ENCODE measurements at regions of chr18 and their contacts with region 1.

Region 1: GRCh38 chr18:57630002-57630753 is 8.5 kb upstream of the NARS1 start:
- DNase-seq: peak; percentile 65
- ATAC-seq: peak; percentile 93
- H3K4me3 ChIP-seq: peak overlapping the region; percentile 90
- H3K27ac ChIP-seq: peak overlapping the region; percentile 87
- H3K4me1 ChIP-seq: peaks cover 6% of the 10 kb centered on the region
- H3K27me3 ChIP-seq: no peaks in the 10 kb centered on the region
- CTCF ChIP-seq: peak; percentile 74 to 81 (median 78)
- EP300 ChIP-seq: no peak
- POLR2A ChIP-seq: peak; percentile 74
- RAD21 ChIP-seq: peak; percentile 82

Region 2: DNA sequence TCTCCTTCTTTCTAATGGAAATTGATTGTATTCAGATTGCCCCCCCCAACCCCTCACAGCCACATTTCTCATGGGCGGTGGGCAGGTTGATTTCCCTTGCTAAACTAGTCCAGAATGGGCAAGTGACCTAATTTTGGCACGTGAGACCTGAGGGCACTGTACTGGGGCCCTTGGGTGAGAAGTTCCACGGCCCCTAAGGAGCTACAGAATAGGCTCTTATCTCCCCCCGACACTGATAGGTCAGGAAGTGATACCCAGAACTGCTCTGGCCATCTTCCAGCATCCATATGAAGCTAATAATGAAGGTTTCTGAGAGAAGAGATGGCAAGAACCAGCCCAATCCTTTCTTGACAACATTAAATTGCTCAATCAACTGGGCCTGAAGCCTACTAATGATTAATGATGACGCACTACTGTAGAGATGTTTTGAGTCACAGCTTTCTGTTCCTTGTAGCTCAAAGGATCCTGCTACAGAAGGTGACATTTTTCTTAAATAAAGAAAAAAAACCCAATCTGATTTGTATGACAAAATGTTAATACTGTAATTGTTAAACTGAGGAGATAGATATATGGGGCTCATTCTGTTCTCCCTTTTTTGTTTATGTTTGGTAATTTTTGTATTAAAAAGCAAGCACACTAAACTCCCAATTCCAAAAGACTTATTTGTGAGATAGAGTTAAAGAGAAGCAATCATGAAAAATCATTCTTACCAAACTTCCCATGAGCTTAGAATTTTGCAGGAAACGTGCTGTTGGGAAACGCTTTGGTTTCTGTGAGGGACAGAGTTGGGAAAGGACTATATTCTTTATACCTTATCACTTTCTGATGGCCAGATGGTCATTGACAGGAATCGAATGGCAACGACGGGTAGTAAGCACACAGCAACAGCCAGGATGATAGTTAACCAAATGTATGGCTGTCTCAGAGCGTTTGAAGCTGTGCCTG is 19.6 kb after region 1 on chr18:
- CTCF ChIA-PET with region 1: no interaction called
- POLR2A ChIA-PET with region 1: no interaction called
- RAD21 ChIA-PET with region 1: no interaction called
- SMC1A ChIA-PET with region 1: no interaction called
- in situ Hi-C with region 1: no loop called
- intact Hi-C with region 1: loop called (anchors 2 kb)
- DNase-seq: peak; percentile 49
- ATAC-seq: peak; percentile 97
- H3K4me3 ChIP-seq: no peak overlapping the region
- H3K27ac ChIP-seq: no peak overlapping the region
- H3K4me1 ChIP-seq: peaks cover 5% of the 10 kb centered on the region
- H3K27me3 ChIP-seq: no peaks in the 10 kb centered on the region
- CTCF ChIP-seq: no peak
- EP300 ChIP-seq: peak in 1 of 2 experiments; percentile 77; a peak in 2 of 4 replicates
- POLR2A ChIP-seq: no peak
- RAD21 ChIP-seq: no peak

Region 3: DNA sequence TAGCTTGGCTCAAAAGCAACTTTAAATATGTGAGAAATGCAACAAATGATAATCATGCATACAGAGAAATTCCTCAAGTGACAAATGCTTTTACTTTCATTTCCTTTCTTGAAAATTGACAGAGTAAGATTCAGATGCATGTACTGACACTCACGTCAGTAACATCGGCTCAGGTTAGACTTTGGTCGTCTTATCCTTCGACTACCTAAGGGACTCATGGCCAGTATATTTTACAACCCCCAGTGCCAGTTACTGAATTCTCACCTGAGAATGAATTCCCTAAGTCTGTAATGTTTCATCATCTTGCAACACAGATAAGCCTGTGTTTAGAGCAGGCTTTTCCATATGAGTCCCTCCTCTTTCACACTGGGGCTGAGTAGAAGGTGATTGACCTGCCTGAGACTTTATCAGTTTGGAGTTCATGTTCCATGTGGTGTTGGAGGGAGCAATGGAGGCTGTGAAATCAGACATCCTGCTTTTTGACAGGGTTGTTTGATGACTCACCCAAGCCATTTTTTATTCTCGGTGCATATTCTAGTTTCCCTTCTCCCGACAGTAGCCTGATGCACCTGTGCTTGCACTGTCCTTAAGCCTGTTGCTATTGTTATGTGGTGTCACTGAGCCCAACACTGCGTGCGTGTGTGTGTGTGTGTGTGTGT is 203.4 kb after region 1 on chr18:
- CTCF ChIA-PET with region 1: interaction called, 13 read pairs
- POLR2A ChIA-PET with region 1: interaction called, 3 read pairs
- RAD21 ChIA-PET with region 1: interaction called, 14 read pairs
- SMC1A ChIA-PET with region 1: interaction called, 9 read pairs
- in situ Hi-C with region 1: loop called (anchors 25 kb)
- intact Hi-C with region 1: no loop called
- DNase-seq: peak; percentile 55
- ATAC-seq: peak; percentile 52
- H3K4me3 ChIP-seq: peak overlapping the region; percentile 20; the same call in 1 of the 2 replicates
- H3K27ac ChIP-seq: peak overlapping the region; percentile 82
- H3K4me1 ChIP-seq: peaks cover 20% of the 10 kb centered on the region
- H3K27me3 ChIP-seq: no peaks in the 10 kb centered on the region
- CTCF ChIP-seq: no peak
- EP300 ChIP-seq: no peak
- POLR2A ChIP-seq: no peak
- RAD21 ChIP-seq: no peak

Region 4: DNA sequence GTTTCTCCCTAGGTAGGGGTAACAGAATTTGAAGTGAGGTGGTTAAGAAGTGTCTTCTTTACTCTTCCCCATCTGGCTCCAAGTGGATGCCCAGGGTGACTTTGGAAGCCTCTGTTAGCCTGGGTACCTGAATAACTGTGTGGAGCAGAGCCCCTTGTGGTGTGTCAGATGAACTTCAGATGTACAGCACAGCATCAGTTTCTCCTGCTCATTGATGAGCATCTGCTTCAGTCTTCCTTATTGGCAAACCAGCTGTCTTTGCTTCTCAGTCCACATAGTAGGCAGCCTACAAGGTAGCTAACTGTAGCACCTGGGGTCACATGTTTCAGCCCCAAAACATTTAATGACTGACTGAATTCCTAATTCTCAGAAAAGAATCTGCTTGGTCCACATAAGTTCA is 229.1 kb after region 1 on chr18:
- CTCF ChIA-PET with region 1: interaction called, 8 read pairs
- POLR2A ChIA-PET with region 1: interaction called, 3 read pairs
- RAD21 ChIA-PET with region 1: interaction called, 9 read pairs
- SMC1A ChIA-PET with region 1: interaction called, 24 read pairs
- in situ Hi-C with region 1: no loop called
- intact Hi-C with region 1: loop called (anchors 5 kb)
- DNase-seq: no peak
- ATAC-seq: peak; percentile 88
- H3K4me3 ChIP-seq: no peak overlapping the region
- H3K27ac ChIP-seq: no peak overlapping the region
- H3K4me1 ChIP-seq: no peaks in the 10 kb centered on the region
- H3K27me3 ChIP-seq: peaks cover 0 to 5% of the 10 kb centered on the region in 2 experiments
- CTCF ChIP-seq: peak; percentile 55 to 69 (median 68)
- EP300 ChIP-seq: no peak
- POLR2A ChIP-seq: no peak
- RAD21 ChIP-seq: peak; percentile 73

Region 5: DNA sequence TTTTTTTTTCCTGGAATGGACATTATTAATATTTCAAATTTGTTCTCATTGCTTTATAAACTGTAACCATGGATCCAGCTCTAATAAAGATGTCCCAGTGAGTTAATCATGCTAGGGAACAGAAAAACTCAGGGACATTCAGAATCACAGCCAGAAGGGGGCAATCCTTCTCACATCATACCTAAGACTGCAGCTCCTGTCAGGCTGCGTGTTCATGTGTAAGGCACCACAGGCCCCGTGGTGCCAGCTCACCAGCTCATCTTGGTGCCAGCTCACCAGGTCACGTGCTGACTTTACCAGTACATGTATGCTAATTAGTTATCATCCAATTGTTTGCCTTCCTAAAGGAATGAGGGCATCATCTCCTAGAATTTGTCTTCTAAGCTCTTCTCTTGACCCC is 329.1 kb after region 1 on chr18:
- CTCF ChIA-PET with region 1: interaction called, 6 read pairs
- POLR2A ChIA-PET with region 1: no interaction called
- RAD21 ChIA-PET with region 1: no interaction called
- SMC1A ChIA-PET with region 1: interaction called, 14 read pairs
- in situ Hi-C with region 1: no loop called
- intact Hi-C with region 1: no loop called
- DNase-seq: no peak
- ATAC-seq: peak; percentile 86
- H3K4me3 ChIP-seq: no peak overlapping the region
- H3K27ac ChIP-seq: no peak overlapping the region
- H3K4me1 ChIP-seq: no peaks in the 10 kb centered on the region
- H3K27me3 ChIP-seq: 0 out of 4 replicates have a peak, but pooled peaks cover 0 to 2% of the 10 kb centered on the region in 2 experiments
- CTCF ChIP-seq: peak; percentile 45 to 54 (median 49); a peak in 5 of 6 replicates
- EP300 ChIP-seq: no peak
- POLR2A ChIP-seq: no peak
- RAD21 ChIP-seq: 0 out of 2 replicates have a peak, but pooled peaks have one; percentile 27

Measured in GM12878 (cell line).